ENCODE measurements at regions of chr2 and their contacts with region 1.

Region 1: GRCh38 chr2:84946204-84947009 is 24.6 kb upstream of the KCMF1 start:
- DNase-seq: peak in 28 of 35 experiments; percentile 1 to 71 (median 22)
- ATAC-seq: peak; percentile 84 to 90 (median 85)
- H3K4me3 ChIP-seq: peak overlapping the region; percentile 21 to 39
- H3K4me3 Mint-ChIP-seq: peak overlapping the region; percentile 57 to 68 (median 57)
- H3K27ac ChIP-seq: peak overlapping the region; percentile 63
- H3K27ac Mint-ChIP-seq: peak overlapping the region; percentile 88 to 93
- H3K4me1 ChIP-seq: peaks cover 15 to 22% of the 10 kb centered on the region in 2 experiments
- H3K4me1 Mint-ChIP-seq: peaks cover 24 to 44% (median 37%) of the 10 kb centered on the region in 3 donors
- H3K27me3 ChIP-seq: no peaks in the 10 kb centered on the region
- H3K27me3 Mint-ChIP-seq: no peaks in the 10 kb centered on the region

Region 2: DNA sequence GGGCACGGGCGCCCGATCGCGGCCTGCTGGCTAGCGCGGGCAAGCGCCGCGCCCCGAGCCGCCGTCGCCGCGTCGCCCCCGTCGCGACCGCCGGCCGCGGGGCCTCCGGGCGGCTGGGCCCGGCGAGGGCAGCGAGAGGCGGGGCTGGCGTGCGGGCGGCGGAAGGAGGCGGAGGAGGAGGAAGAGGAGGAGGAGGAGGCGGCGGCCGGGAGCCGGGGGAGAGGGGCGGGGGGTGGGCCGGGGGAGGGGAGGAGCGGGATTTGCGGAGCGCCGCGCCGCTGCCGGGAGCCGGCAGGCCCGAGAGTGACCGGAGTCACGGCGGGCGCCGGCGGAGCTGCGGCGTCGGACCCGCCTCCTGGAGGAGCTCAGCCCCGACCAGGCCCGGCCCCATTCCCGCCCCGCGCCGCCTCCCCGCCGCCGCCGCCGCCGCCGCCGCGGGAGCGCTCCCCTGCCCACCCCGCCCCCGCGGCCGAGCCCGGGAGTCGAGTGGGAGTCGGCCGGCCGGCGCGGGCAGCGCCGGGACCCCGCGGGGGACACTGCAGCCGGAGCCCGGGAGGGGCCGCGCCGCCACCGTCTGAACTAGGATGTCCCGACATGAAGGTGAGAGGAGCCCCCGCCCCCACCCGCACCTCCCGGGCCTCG is 24.6 kb after region 1 on chr2 and contains the start of gene KCMF1:
- CTCF ChIA-PET with region 1: interaction called in 1 of 2 experiments, 14 read pairs
- POLR2A ChIA-PET with region 1: interaction called in 1 of 2 experiments, 7 read pairs
- DNase-seq: peak in 34 of 35 experiments; percentile 20 to 75 (median 52)
- ATAC-seq: peak; percentile 63 to 67 (median 63)
- H3K4me3 ChIP-seq: peak within 1 kb of the TSS; percentile 95 to 99
- H3K4me3 Mint-ChIP-seq: peak within 1 kb of the TSS; percentile 98 to 99 (median 99)
- H3K27ac ChIP-seq: peak within 1 kb of the TSS; percentile 90
- H3K27ac Mint-ChIP-seq: peak within 1 kb of the TSS; percentile 98 to 99
- H3K4me1 ChIP-seq: peaks cover 26 to 34% of the 10 kb centered on the region in 2 experiments
- H3K4me1 Mint-ChIP-seq: peaks cover 59 to 65% (median 64%) of the 10 kb centered on the region in 3 donors
- H3K27me3 ChIP-seq: no peaks in the 10 kb centered on the region
- H3K27me3 Mint-ChIP-seq: no peaks in the 10 kb centered on the region
- total RNA-seq, gene KCMF1: 56.7 to 62.5 (median 60.3) TPM

Region 3: GRCh38 chr2:84999553-84999955 is 53.1 kb after region 1 on chr2:
- CTCF ChIA-PET with region 1: no interaction called
- POLR2A ChIA-PET with region 1: interaction called in 1 of 2 experiments, 16 read pairs
- DNase-seq: no peak
- ATAC-seq: no peak
- H3K4me3 ChIP-seq: no peak overlapping the region
- H3K4me3 Mint-ChIP-seq: no peak overlapping the region
- H3K27ac ChIP-seq: no peak overlapping the region
- H3K27ac Mint-ChIP-seq: peak overlapping the region; percentile 33 to 68
- H3K4me1 ChIP-seq: peaks cover 4 to 23% of the 10 kb centered on the region in 2 experiments
- H3K4me1 Mint-ChIP-seq: peaks cover 62 to 73% (median 64%) of the 10 kb centered on the region in 3 donors
- H3K27me3 ChIP-seq: no peaks in the 10 kb centered on the region
- H3K27me3 Mint-ChIP-seq: no peaks in the 10 kb centered on the region

Region 4: DNA sequence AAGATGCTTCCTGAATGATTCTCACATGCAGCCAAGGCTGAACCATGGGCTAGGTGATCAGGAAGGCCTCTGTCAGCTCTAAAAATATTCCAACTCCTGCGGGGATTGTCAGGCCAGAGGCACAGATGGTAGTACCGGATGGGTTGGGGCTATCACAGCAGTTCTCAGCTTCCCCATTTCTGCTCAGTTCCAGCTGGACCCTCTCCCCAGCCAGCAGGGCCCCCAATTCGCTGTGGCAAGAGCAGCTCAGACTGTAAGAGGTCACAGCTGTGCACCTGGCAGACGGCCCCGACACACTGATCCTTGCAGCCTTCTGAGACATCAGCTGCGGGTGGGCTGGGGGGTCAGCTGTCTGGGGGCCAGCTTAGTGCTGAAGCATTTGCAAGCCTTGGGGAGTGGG is 143.2 kb after region 1 on chr2:
- CTCF ChIA-PET with region 1: no interaction called
- POLR2A ChIA-PET with region 1: no interaction called
- DNase-seq: no peak
- ATAC-seq: no peak
- H3K4me3 ChIP-seq: no peak overlapping the region
- H3K4me3 Mint-ChIP-seq: no peak overlapping the region
- H3K27ac ChIP-seq: no peak overlapping the region
- H3K27ac Mint-ChIP-seq: no peak overlapping the region
- H3K4me1 ChIP-seq: no peaks in the 10 kb centered on the region
- H3K4me1 Mint-ChIP-seq: no peaks in the 10 kb centered on the region
- H3K27me3 ChIP-seq: peaks cover 2 to 14% of the 10 kb centered on the region in 2 experiments
- H3K27me3 Mint-ChIP-seq: peaks cover 0 to 9% of the 10 kb centered on the region in 2 donors